ENCODE measurements at regions of chr3 and their contacts with region 1.

Region 1: DNA sequence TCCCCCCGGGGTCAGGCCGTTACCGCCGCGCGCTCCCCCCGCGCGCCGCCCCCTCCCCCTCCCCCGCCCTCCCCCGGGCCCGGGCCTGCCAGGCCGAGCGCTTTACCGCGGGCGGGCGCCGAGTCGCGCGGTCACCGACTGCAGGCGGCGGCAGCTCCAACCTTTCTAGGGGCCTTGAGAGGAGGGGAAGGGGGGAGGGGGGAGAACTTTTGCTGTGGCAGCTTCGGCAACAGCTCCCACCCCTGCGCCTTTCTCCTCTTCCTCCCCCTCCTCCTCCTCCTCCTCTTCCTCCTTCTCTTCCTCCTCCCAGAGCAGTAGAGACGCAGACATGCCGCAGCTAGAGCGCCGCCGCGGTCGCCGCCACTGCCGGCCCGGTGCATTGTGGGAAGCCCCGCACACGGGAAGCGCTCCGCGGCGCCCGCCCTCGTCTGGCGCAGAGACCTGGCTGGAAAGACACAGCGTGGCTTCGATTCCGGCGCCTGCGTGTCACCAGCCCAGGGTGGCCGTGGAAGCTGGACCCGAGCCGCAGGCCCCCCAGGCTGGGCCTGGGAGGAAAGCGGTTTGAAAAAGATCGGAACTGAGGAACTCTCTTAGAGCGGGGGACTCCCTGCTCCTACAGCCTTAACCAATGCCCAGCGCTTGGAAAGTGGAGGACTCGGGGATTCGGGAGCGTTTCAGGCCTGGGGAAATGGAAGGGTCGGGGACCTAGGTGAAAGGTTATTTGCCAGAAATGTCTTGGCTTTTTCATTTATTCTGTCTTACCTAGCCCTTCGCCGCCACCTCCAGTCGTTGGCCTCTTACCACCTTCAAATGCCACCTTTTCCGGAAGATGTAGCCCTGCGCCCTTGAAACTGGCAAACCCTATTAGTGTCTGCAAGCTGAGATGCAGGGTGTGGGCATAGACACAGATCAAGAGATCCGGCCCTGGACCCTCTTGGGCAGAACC is at the start of gene ZNF148:
- DNase-seq: peak; percentile 88
- H3K4me3 ChIP-seq: peak within 1 kb of the TSS; percentile 83 to 97 (median 96)
- H3K27ac ChIP-seq: peak within 1 kb of the TSS; percentile 82
- H3K4me1 ChIP-seq: peaks cover 9% of the 10 kb centered on the region
- H3K27me3 ChIP-seq: no peaks in the 10 kb centered on the region
- CTCF ChIP-seq: peak in 1 of 2 donors; percentile 17
- total RNA-seq, gene ZNF148: 32.8 to 36.9 TPM

Region 2: DNA sequence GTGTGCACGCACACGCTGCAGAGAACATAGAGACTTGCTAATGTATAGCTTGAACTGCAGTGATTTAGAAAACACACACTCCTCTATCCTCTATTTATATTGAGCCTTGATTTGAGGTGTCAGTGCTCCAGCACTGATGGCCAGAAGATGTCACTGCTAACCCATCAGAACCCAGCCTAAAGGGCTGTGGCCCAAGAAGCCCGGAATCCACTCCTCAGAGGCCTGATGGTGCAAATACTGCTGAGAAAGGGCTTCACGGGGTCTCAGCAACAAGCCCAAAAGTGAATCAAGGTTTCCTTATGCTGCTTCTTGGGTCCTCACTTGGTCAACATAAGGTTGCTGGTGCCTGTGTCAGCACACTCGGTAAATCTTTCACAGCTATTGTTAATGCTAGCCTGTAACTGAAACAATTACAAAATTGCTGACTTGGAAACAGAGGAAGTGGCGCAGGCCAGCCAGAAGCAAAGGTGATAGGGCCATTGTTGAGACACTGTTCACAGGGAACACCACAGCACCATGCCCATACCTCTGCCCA is 379.7 kb before region 1 on chr3:
- CTCF ChIA-PET with region 1: no interaction called
- dilution Hi-C with region 1: no loop called
- in situ Hi-C with region 1: no loop called
- intact Hi-C with region 1: loop called (anchors 5 kb)
- DNase-seq: peak; percentile 27
- H3K4me3 ChIP-seq: no peak overlapping the region
- H3K27ac ChIP-seq: no peak overlapping the region
- H3K4me1 ChIP-seq: no peaks in the 10 kb centered on the region
- H3K27me3 ChIP-seq: no peaks in the 10 kb centered on the region
- CTCF ChIP-seq: peak; percentile 65 to 67

Region 3: DNA sequence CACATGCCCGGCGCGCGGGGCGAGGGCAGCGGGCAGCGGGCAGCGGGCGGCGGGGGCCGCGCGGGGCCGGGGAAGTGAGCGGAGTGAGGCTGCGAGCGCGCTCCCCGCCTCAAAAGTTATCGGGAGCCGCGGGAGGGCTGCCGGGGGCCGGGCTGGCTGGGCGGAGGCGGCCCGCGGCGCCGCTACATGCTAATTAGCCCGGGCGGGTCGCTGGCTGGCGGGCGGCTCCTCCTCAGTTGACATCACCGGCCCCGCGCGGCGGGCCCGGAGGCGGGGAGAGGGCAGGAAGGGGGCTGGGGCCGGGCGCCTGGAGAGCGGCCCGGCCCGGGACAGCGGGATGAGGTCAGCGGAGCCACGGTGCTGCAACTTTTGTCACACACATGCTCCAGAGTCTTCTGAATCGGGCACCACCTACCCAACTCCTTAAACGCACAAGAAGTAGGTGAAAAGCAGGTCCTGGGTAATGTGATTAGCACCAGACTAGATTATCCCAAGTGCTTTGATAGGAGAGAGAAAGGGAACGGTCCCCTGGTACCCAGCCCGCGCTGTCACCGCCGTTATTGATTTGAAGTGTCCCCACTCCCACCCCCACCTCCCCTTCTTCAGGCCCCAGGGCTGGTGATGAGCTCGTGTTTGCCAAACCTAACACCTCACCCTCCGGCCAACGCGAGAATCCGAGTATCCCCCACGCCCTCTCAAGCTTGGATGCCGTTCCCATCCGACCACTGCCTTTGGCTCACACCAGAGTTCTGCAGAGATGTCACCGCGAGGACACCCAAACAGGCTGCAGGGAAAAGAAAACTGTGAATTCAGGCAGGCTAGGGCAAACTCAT is 319.1 kb before region 1 on chr3 and contains the start of gene HEG1:
- CTCF ChIA-PET with region 1: no interaction called
- dilution Hi-C with region 1: no loop called
- in situ Hi-C with region 1: no loop called
- intact Hi-C with region 1: loop called (anchors 5 kb)
- DNase-seq: peak; percentile 73
- H3K4me3 ChIP-seq: peak within 1 kb of the TSS; percentile 59 to 79 (median 77)
- H3K27ac ChIP-seq: peak within 1 kb of the TSS; percentile 60
- H3K4me1 ChIP-seq: peaks cover 58% of the 10 kb centered on the region
- H3K27me3 ChIP-seq: no peaks in the 10 kb centered on the region
- CTCF ChIP-seq: no peak
- total RNA-seq, gene HEG1: 24.8 to 33.8 TPM

Region 4: DNA sequence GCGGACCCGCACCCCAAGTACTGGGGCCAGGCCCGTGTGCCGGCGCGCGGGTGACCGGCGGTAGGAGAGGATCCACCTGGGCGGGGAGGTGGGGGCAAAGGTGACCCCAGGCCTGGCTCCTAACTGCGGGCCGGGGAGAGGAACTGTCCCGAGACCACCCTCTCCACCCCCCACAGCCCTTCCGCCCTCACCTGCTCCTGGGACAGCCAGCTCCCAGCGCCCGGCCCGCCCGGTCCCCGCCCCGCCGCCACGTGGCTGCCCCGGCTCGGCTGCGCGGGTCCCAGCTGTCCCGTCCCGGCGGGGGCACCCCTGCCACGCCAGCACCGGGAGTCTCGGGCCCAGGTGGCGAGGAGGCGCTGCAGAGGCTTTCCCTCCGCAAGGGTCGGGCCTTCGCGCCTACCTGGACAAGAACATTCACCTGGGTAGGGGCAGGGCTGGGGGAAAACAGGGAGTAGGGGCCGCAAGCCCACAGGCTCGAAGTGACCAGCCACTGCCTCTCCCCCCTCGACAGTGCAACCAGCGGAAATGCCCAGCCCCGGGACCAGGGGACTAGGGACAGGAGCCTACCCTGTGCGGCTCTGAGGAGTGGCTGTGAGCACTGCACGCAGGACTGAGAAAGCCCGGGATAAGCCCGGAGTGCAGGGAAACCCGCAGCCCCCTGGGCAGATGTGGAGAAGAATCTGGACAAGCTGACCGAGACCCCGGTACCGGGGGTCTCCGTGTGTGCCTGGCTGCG is 162.6 kb before region 1 on chr3 and contains the start of gene SLC12A8:
- CTCF ChIA-PET with region 1: no interaction called
- dilution Hi-C with region 1: no loop called
- in situ Hi-C with region 1: no loop called
- intact Hi-C with region 1: loop called (anchors 10 kb)
- DNase-seq: no peak
- H3K4me3 ChIP-seq: peak within 1 kb of the TSS; percentile 40 to 54 (median 44)
- H3K27ac ChIP-seq: no peak within 1 kb of the TSS
- H3K4me1 ChIP-seq: peaks cover 10% of the 10 kb centered on the region
- H3K27me3 ChIP-seq: no peaks in the 10 kb centered on the region
- CTCF ChIP-seq: no peak
- total RNA-seq, gene SLC12A8: 12.5 to 24.8 TPM

Region 5: DNA sequence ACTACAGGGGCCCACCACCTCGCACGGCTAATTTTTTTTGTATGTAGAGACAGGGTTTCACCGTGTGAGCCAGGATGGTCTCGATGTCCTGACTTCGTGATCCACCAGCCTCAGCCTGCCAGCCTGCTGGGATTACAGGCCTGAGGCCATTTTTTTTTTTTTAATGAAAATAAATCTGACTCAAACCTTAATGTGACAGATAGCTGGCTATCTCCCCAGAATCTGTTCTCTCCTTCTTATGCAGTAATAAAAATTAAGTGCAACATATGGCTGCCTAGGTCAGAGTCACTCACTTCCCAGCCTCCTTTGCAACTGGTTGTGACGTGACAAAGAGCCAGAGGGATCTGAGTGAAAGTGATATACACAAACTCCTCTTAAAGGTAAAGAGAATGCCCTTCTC is 53.1 kb before region 1 on chr3:
- CTCF ChIA-PET with region 1: no interaction called
- dilution Hi-C with region 1: no loop called
- in situ Hi-C with region 1: no loop called
- intact Hi-C with region 1: no loop called
- DNase-seq: peak; percentile 25
- H3K4me3 ChIP-seq: no peak overlapping the region
- H3K27ac ChIP-seq: no peak overlapping the region
- H3K4me1 ChIP-seq: peaks cover 13% of the 10 kb centered on the region
- H3K27me3 ChIP-seq: no peaks in the 10 kb centered on the region
- CTCF ChIP-seq: no peak

Region 6: DNA sequence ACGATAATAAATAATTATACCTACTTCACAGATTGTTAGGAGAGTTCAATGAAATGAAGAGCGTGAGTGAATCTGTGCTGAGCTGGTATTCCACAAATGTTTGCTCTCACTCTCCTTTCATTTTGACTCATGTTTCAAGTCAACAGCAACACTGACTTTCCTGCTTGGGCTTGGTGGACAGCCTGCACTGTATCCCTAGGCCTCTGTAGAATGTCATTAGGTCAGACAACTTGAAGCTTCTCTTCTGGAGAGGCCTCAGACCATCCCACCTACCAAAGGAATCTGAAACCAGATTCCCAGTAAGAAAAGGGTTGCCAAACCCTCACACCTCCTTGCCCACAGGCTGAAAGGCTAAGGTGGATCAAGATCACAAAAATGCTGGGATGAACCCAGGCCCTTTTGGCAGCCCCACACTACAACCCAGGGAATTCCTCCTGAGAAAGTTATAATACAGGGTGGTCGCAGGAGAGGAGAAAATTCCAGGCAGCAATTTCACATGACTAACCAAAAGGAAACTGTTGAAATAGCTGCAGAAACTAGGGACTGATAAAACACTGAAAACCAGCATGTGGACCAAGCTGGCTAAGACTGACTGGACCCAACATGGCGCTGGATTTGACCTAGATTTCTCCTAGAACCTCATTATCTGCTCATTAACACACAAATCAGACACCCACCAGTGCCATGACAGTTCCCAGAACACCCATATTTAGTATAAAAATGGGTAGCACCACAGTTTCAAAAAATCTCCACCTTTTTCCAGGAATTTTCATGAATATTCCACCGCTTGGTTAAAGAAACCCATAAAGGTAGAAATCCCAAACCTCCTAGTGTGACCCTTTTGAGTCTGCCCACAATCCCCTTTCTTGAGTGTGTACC is 56.9 kb after region 1 on chr3:
- CTCF ChIA-PET with region 1: no interaction called
- dilution Hi-C with region 1: no loop called
- in situ Hi-C with region 1: no loop called
- intact Hi-C with region 1: loop called (anchors 5 kb)
- DNase-seq: no peak
- H3K4me3 ChIP-seq: no peak overlapping the region
- H3K27ac ChIP-seq: no peak overlapping the region
- H3K4me1 ChIP-seq: peaks cover 14% of the 10 kb centered on the region
- H3K27me3 ChIP-seq: no peaks in the 10 kb centered on the region
- CTCF ChIP-seq: no peak